HepG2 (cell line): ENCODE measurements at regions of chr2 and their contacts with region 1.

Region 1: DNA sequence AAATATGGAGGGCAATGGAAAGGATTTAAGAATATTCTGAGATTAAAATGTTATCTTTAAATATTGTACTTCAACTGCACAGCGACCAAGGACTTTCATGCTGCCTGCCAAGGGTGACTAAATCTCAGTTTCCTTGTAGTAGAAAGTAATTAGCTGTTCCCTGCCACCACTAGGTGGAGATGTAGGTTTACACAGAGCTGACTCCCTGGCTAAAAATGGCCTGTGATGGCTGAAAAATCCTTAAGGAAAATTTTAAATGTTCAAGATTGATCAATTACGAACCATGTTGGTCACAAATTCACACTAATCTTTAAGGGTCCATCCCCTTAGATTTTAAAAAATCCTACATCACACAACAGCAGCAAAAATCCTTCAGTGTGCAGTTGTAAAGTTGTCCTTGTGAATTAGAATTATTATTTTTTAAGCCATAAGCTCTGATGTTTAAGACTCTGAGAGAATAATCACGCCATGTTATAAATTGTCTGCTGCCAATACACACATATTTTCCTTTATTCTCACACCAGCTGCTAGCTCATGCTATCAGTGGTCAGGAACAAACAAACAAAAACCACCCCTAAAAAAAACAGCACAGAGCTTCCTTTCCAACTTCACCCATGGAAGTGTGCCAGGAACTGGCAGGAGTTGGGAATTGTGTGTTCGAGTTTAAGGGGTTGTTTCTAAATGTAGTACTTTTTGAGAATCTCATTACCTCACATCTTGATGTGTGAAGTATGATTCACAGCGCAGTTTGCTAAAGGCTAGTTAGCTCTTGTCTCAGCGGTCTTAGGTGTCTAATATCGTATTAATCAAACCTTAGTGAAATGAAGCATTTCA is 399.8 kb downstream of the TMEM182 start:
- DNase-seq: peak; percentile 62
- ATAC-seq: peak; percentile 89
- H3K4me3 ChIP-seq: no peak overlapping the region
- H3K27ac ChIP-seq: no peak overlapping the region
- H3K4me1 ChIP-seq: peaks cover 5% of the 10 kb centered on the region
- H3K27me3 ChIP-seq: no peaks in the 10 kb centered on the region
- CTCF ChIP-seq: peak; percentile 86
- EP300 ChIP-seq: no peak
- POLR2A ChIP-seq: no peak
- RAD21 ChIP-seq: peak; percentile 54; the same call in 1 of the 2 replicates

Region 2: DNA sequence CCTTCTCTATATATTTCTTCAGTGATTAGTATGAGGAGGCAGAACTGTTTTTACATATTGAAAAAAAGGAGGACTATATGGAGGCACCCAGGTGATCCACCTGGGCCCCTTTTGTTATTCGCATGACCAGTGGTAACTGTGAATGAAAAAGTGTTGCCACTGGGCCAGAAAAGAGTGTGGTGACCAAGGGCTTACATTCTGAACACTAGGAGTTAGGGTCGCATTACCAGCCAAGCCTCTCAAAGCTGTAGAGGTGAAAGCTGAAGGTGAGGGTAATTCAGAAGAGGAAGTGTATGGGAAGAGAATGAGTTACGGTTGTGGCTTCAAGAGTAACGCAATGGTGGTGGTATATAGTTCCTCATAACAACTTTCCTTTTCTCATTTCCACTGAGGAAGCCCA is 87.8 kb after region 1 on chr2:
- CTCF ChIA-PET with region 1: no interaction called
- POLR2A ChIA-PET with region 1: no interaction called
- in situ Hi-C with region 1: no loop called
- intact Hi-C with region 1: no loop called
- DNase-seq: no peak
- ATAC-seq: no peak
- H3K4me3 ChIP-seq: no peak overlapping the region
- H3K27ac ChIP-seq: no peak overlapping the region
- H3K4me1 ChIP-seq: no peaks in the 10 kb centered on the region
- H3K27me3 ChIP-seq: no peaks in the 10 kb centered on the region
- CTCF ChIP-seq: no peak
- EP300 ChIP-seq: no peak
- POLR2A ChIP-seq: no peak
- RAD21 ChIP-seq: no peak

Region 3: DNA sequence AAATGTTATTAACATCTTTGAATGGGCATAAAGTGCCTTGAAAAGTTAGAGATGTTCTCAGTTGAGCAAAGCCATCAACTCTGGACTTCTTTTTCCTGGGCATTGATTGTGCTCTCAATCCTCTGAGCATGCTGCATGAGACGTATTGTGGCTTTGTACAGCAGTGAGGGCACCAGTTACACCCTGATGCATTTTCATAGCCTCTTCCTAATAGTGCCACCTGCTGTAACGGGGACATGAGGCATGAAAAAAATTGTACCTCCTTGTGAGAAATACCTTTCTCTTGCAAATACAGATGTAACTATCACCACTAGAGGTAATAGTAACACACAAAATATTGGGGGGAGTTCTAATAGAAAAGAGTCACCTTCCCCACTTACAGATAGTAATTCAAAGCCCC is 297.6 kb after region 1 on chr2:
- CTCF ChIA-PET with region 1: no interaction called
- POLR2A ChIA-PET with region 1: no interaction called
- in situ Hi-C with region 1: no loop called
- intact Hi-C with region 1: loop called (anchors 2 kb)
- DNase-seq: no peak
- ATAC-seq: 0 out of 3 replicates have a peak, but pooled peaks have one; percentile 41
- H3K4me3 ChIP-seq: no peak overlapping the region
- H3K27ac ChIP-seq: no peak overlapping the region
- H3K4me1 ChIP-seq: no peaks in the 10 kb centered on the region
- H3K27me3 ChIP-seq: no peaks in the 10 kb centered on the region
- CTCF ChIP-seq: peak; percentile 17; the same call in 1 of the 2 replicates
- EP300 ChIP-seq: no peak
- POLR2A ChIP-seq: no peak
- RAD21 ChIP-seq: no peak

Region 4: GRCh38 chr2:103921161-103921560 is 759.5 kb after region 1 on chr2:
- CTCF ChIA-PET with region 1: no interaction called
- POLR2A ChIA-PET with region 1: no interaction called
- in situ Hi-C with region 1: no loop called
- intact Hi-C with region 1: loop called (anchors 1 kb)
- DNase-seq: no peak
- ATAC-seq: no peak
- H3K4me3 ChIP-seq: no peak overlapping the region
- H3K27ac ChIP-seq: no peak overlapping the region
- H3K4me1 ChIP-seq: no peaks in the 10 kb centered on the region
- H3K27me3 ChIP-seq: no peaks in the 10 kb centered on the region
- CTCF ChIP-seq: no peak
- EP300 ChIP-seq: no peak
- POLR2A ChIP-seq: no peak
- RAD21 ChIP-seq: no peak

Region 5: DNA sequence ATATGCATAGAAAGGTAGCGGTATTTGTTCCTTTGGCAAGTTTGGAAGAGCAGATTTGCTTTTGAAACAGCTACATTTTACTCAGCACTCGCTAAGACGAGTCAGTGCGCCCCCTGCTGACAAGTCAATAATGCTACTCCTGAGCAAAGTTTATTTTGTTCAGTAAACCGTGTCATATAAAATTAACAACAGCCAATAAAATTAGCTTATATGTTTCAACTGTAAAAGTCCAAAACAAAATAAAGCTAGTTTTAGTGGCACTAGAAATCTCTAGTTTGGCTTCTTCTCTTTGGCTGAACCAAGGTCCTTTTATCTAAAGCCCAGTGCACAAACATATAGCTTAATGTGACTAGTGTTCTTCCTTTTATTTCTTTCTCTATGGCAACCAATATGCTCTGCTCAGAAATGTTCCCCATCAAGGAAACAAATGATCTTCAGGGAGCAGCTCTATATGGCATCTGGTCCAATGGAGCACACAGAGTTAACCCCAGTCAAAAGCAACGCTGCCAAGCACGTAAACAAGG is 1688.0 kb after region 1 on chr2:
- CTCF ChIA-PET with region 1: interaction called, 11 read pairs
- POLR2A ChIA-PET with region 1: no interaction called
- in situ Hi-C with region 1: no loop called
- intact Hi-C with region 1: no loop called
- DNase-seq: peak; percentile 47
- ATAC-seq: peak; percentile 59
- H3K4me3 ChIP-seq: no peak overlapping the region
- H3K27ac ChIP-seq: no peak overlapping the region
- H3K4me1 ChIP-seq: no peaks in the 10 kb centered on the region
- H3K27me3 ChIP-seq: peaks cover 10 to 83% of the 10 kb centered on the region in 2 experiments; a peak in 4 of 5 replicates
- CTCF ChIP-seq: peak; percentile 79
- EP300 ChIP-seq: no peak
- POLR2A ChIP-seq: no peak
- RAD21 ChIP-seq: peak; percentile 52

Region 6: DNA sequence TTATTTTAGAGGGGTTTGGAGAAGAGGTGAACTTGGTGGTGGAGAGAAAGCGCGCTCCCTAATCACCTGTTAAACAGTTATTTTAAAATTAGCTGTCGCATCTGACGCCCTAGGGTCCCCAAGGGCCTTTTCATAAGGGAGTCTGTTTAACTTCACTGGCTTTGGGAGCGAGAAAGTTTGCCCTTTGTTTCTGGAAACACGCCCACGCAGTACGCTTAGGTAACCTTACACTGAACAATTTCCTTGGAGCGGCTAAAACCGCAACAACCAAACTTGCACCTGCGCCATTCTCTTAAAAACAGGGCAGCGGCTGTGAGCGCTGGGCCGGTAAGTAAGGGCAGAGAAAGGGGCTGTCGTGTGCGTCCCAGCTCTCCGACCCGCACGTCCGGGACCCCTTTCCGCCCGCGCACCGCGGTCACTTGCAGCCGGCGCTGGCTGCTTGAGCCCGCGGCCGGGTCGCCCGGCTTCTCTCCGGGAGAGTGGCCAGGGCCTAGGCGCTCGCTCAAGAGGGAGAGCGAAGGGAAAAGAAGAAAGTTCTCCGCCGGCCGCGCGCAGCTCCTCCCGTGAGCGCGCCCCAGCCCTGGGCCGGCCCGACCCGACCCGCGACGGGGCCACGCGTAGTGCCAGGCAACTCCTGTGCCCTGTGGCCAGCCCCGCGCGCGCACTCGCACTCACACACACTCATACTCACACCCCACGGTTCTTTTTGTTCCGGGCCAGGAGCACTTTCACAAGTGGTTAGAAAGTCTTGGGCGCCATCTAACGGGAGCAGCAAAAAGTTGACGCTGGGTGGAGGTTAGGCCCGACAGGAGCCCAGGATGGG is 1711.4 kb after region 1 on chr2:
- CTCF ChIA-PET with region 1: interaction called, 7 read pairs
- POLR2A ChIA-PET with region 1: no interaction called
- in situ Hi-C with region 1: no loop called
- intact Hi-C with region 1: loop called (anchors 1 kb)
- DNase-seq: peak; percentile 58
- ATAC-seq: peak; percentile 95
- H3K4me3 ChIP-seq: peak overlapping the region; percentile 52 to 70 (median 56); a peak in 4 of 6 replicates
- H3K27ac ChIP-seq: no peak overlapping the region
- H3K4me1 ChIP-seq: peaks cover 7% of the 10 kb centered on the region; the same call in 1 of the 2 replicates
- H3K27me3 ChIP-seq: peaks cover 9 to 65% of the 10 kb centered on the region in 2 experiments
- CTCF ChIP-seq: peak; percentile 86
- EP300 ChIP-seq: no peak
- POLR2A ChIP-seq: no peak
- RAD21 ChIP-seq: peak; percentile 85

Region 7: DNA sequence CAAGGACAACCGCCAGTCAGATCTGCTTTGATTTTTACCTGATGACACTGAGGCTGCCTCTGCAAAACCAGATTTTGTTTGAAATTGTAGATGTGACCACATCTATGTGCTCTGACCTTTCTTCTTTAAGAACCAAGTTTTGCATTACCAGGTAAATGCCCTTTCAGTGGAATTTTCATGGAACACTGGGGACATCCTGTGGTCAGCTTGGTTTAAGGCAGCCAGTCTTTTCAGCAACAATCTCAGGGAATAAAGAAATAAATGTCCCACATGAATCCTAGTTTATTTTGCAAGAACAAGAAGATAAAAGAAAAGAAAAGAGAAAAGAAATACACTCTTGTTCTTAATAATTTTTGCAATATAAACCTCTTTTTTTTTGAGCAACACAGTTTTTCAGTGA is 1782.8 kb after region 1 on chr2:
- CTCF ChIA-PET with region 1: interaction called, 4 read pairs
- POLR2A ChIA-PET with region 1: no interaction called
- in situ Hi-C with region 1: loop called (anchors 25 kb)
- intact Hi-C with region 1: no loop called
- DNase-seq: peak; percentile 21
- ATAC-seq: peak; percentile 66
- H3K4me3 ChIP-seq: no peak overlapping the region
- H3K27ac ChIP-seq: no peak overlapping the region
- H3K4me1 ChIP-seq: peaks cover 6% of the 10 kb centered on the region; the same call in 1 of the 2 replicates
- H3K27me3 ChIP-seq: peaks cover 0 to 14% of the 10 kb centered on the region in 2 experiments; a peak in 2 of 5 replicates
- CTCF ChIP-seq: peak; percentile 69
- EP300 ChIP-seq: no peak
- POLR2A ChIP-seq: no peak
- RAD21 ChIP-seq: peak; percentile 59